ENCODE measurements at regions of chr9 and their contacts with region 1.

Region 1: GRCh38 chr9:110217656-110218099 is 9.7 kb upstream of the C9orf152 start:
- DNase-seq: no peak
- ATAC-seq: no peak
- H3K4me3 Mint-ChIP-seq: no peak overlapping the region
- H3K27ac Mint-ChIP-seq: no peak overlapping the region
- H3K4me1 Mint-ChIP-seq: peaks cover 9% of the 10 kb centered on the region
- H3K27me3 Mint-ChIP-seq: peaks cover 37% of the 10 kb centered on the region

Region 2: DNA sequence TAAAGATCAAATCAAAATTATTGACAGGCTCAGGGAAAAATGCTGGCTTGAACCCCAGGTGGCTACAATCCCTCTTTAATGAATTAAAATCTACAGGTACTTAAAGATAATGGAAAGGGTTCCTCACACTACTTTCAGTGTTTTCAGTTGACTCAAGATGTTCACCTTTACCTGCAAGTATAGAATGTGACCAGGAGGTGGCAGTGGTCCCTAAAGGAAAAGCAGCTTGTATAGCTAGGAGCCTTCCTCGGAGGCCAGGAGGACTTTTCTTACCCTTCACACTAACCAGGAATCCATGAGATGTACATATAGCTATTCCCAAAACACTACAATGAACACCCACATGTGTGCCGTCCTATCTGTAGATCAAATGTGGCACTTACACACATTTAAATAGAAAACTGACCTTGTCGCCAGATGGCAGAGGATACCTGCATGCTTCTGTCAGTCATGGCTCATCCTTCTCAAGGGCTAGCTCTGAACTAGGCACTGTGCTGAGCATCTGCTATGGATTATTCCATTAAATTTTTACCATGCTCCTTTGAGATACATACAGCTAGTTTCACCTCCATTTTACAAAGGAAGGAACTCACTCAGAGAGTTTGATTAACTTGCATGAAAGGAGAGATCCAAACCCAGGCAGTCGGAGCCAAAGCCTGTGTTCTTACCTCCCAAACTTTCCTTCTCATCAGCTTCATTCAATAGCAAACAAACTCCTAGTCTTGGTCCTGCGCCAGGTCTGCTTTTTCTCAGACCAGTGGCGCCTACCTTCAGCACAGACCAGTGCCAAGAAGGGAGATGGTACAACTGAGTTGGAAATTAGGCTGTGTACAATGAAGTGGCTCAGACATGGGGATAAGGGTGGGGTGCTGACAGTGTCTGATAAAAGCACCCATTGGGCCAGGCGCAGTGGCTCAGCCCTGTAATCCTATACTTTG is 34.2 kb before region 1 on chr9:
- CTCF ChIA-PET with region 1: interaction called, 25 read pairs
- DNase-seq: peak; percentile 66
- ATAC-seq: peak; percentile 60
- H3K4me3 Mint-ChIP-seq: no peak overlapping the region
- H3K27ac Mint-ChIP-seq: no peak overlapping the region
- H3K4me1 Mint-ChIP-seq: no peaks in the 10 kb centered on the region
- H3K27me3 Mint-ChIP-seq: peaks cover 9% of the 10 kb centered on the region

Region 3: DNA sequence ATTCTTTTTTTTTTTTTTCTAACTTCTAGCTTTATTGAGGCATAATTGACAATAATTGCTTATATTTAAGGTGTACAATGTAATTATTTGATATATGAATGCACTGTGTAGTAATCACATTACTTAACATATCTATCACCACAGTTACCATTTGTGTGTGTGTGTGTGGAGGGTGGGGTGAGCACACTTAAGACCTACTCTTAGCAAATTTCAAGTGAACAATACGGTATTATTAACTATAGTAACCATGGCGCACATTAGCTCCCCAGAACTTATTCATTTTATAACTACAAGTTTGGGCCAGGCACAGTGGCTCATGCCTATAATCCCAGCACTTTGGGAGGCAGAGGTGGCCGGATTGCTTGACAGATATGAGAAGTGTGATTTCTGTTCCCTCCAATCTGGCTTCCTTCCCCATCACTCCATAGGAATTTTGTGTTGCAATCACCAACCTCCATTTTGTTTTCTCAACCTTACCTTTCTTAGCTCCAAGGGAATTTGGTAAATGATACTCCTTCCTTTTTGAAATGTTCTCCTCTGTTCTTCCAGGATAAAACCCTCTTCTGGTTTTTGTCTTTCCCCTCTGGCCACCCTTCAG is 23.7 kb after region 1 on chr9:
- CTCF ChIA-PET with region 1: no interaction called
- DNase-seq: no peak
- ATAC-seq: no peak
- H3K4me3 Mint-ChIP-seq: no peak overlapping the region
- H3K27ac Mint-ChIP-seq: no peak overlapping the region
- H3K4me1 Mint-ChIP-seq: no peaks in the 10 kb centered on the region
- H3K27me3 Mint-ChIP-seq: no peaks in the 10 kb centered on the region

Region 4: DNA sequence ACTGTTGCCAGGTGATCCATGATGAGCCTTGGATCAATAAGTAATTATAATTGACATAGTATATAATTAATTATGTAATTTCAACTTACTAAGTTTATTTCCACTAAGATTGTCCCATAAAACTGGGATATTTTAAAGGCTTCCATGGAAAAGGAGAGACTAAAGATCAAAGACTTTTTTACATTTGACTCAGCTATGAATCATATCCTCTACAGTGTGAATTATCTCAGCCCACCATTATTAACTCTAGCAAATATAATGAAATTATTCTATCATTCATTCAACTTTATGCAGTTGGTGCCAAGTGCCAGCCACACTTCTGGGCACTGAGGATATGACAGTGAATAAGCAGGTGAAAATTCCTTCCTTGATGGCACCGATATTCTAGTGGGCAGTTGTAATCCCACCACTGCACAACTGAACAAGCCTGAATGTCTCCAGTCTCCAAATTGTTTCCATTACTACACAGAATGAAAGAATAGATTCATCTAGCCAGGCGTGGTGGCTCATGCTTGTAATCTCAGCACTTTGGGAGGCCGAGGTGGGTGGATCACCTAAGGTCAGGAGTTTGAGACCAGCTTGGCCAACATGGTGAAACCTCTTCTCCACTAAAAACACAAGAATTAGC is 60.5 kb after region 1 on chr9:
- CTCF ChIA-PET with region 1: no interaction called
- DNase-seq: no peak
- ATAC-seq: no peak
- H3K4me3 Mint-ChIP-seq: no peak overlapping the region
- H3K27ac Mint-ChIP-seq: no peak overlapping the region
- H3K4me1 Mint-ChIP-seq: no peaks in the 10 kb centered on the region
- H3K27me3 Mint-ChIP-seq: peaks cover 5% of the 10 kb centered on the region

Region 5: GRCh38 chr9:110329645-110330230 is 112.1 kb after region 1 on chr9:
- CTCF ChIA-PET with region 1: no interaction called
- DNase-seq: no peak
- ATAC-seq: no peak
- H3K4me3 Mint-ChIP-seq: no peak overlapping the region
- H3K27ac Mint-ChIP-seq: no peak overlapping the region
- H3K4me1 Mint-ChIP-seq: no peaks in the 10 kb centered on the region
- H3K27me3 Mint-ChIP-seq: no peaks in the 10 kb centered on the region